A673 (cell line): ENCODE measurements at regions of chr10 and their contacts with region 1.

Region 1: GRCh38 chr10:96831867-96832720 is at the start of gene LCOR:
- DNase-seq: peak; percentile 94
- H3K4me3 ChIP-seq: peak within 1 kb of the TSS; percentile 90
- H3K27ac ChIP-seq: peak within 1 kb of the TSS; percentile 91
- H3K4me1 ChIP-seq: peaks cover 16% of the 10 kb centered on the region
- H3K27me3 ChIP-seq: no peaks in the 10 kb centered on the region
- CTCF ChIP-seq: no peak
- total RNA-seq, gene LCOR: 39.2 and 42.6 TPM in 2 replicates

Region 2: DNA sequence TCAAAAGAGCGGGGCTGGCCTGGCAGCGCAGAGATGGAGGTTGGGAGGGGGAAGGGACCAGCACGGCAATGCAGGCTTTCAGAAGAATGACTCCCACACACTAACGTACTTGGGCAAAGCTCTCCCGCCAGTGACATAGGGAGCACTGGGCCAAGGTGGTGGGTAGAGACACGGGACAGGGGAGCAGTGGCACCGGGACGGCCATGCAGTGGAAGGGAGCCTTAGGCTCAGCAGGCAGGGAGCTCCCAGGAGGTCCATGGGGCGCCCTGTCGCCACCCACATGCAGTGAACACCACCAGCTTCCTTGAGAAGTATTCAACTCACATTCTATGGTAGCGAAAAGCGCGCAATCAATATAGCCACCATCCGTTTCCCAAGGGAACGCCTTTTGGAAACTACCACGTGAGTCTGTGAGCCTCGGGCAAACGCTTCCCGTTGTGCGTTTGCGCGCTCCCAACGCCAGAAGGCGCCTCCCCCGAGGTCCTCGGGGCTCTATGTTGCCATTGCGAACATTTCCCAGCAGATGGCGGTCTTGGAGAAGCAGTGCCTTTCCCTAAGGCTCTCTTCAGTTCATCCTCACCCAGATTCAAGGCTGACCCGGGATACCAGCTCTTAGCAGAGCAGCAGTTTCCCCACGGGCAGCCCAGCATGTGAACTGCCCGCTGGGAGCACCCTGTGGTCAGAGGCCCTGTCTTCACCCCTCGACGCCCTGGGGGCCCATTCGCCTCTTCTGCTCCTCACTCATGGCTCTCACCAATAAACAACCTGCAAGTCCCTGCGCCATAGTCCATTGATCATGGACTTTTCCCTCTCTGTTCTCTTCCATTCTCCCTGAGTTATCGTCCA is 456.9 kb before region 1 on chr10:
- CTCF ChIA-PET with region 1: no interaction called
- POLR2A ChIA-PET with region 1: no interaction called
- intact Hi-C with region 1: loop called (anchors 2 kb)
- DNase-seq: peak; percentile 93
- H3K4me3 ChIP-seq: peak overlapping the region; percentile 41
- H3K27ac ChIP-seq: no peak overlapping the region
- H3K4me1 ChIP-seq: no peaks in the 10 kb centered on the region
- H3K27me3 ChIP-seq: no peaks in the 10 kb centered on the region
- CTCF ChIP-seq: peak; percentile 98

Region 3: GRCh38 chr10:96765406-96766240 is 66.5 kb before region 1 on chr10:
- CTCF ChIA-PET with region 1: no interaction called
- POLR2A ChIA-PET with region 1: interaction called, 12 read pairs
- intact Hi-C with region 1: no loop called
- DNase-seq: peak; percentile 44
- H3K4me3 ChIP-seq: no peak overlapping the region
- H3K27ac ChIP-seq: no peak overlapping the region
- H3K4me1 ChIP-seq: no peaks in the 10 kb centered on the region
- H3K27me3 ChIP-seq: no peaks in the 10 kb centered on the region
- CTCF ChIP-seq: peak; percentile 68